CD8-positive, alpha-beta memory T cell (primary cell): ENCODE measurements at regions of chr3 and their contacts with region 1.

Region 1: DNA sequence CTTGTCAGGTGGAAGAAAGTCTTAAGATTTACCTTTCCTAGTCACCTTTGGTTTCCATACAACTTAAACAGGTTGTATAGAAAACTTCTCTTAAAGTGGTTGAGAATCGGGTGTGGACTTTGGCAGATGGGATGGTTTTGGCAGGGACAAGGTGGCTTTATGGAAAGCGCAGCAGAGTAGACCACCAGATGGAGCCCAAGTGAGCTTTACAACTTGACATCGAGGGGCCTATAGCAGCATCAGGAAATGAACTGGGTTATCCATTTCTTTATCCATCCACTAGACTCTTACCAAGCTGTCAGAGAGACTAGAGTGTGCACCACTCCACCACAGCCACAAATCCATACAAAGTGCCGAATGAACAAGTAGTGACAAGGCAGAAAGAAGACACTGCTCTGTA is 85.3 kb upstream of the MBNL1 start:
- DNase-seq: peak; percentile 20 to 71 (median 52)
- H3K4me3 ChIP-seq: no peak overlapping the region
- H3K4me3 Mint-ChIP-seq: peak overlapping the region in 3 of 7 donors; percentile 35 to 57 (median 37)
- H3K27ac ChIP-seq: no peak overlapping the region
- H3K27ac Mint-ChIP-seq: peak overlapping the region in 7 of 8 donors; percentile 22 to 71 (median 48)
- H3K4me1 ChIP-seq: peaks cover 46% of the 10 kb centered on the region
- H3K4me1 Mint-ChIP-seq: peaks cover 37 to 72% (median 59%) of the 10 kb centered on the region in 3 donors
- H3K27me3 ChIP-seq: no peaks in the 10 kb centered on the region
- H3K27me3 Mint-ChIP-seq: no peaks in the 10 kb centered on the region

Region 2: GRCh38 chr3:152193673-152194267 is 10.3 kb after region 1 on chr3:
- CTCF ChIA-PET with region 1: interaction called, 14 read pairs
- POLR2A ChIA-PET with region 1: interaction called, 3 read pairs
- DNase-seq: peak in 3 of 5 donors; percentile 11 to 61 (median 48)
- H3K4me3 ChIP-seq: peak overlapping the region; percentile 81
- H3K4me3 Mint-ChIP-seq: peak overlapping the region; percentile 87 to 95 (median 89)
- H3K27ac ChIP-seq: peak overlapping the region; percentile 83
- H3K27ac Mint-ChIP-seq: peak overlapping the region; percentile 87 to 99 (median 94)
- H3K4me1 ChIP-seq: peaks cover 66% of the 10 kb centered on the region
- H3K4me1 Mint-ChIP-seq: peaks cover 68 to 89% (median 89%) of the 10 kb centered on the region in 3 donors
- H3K27me3 ChIP-seq: no peaks in the 10 kb centered on the region
- H3K27me3 Mint-ChIP-seq: no peaks in the 10 kb centered on the region

Region 3: GRCh38 chr3:152205097-152205593 is 21.7 kb after region 1 on chr3:
- CTCF ChIA-PET with region 1: interaction called, 14 read pairs
- POLR2A ChIA-PET with region 1: no interaction called
- DNase-seq: peak in 1 of 5 donors; percentile 40
- H3K4me3 ChIP-seq: peak overlapping the region; percentile 69
- H3K4me3 Mint-ChIP-seq: peak overlapping the region; percentile 80 to 91 (median 89)
- H3K27ac ChIP-seq: peak overlapping the region; percentile 62
- H3K27ac Mint-ChIP-seq: peak overlapping the region; percentile 64 to 97 (median 96)
- H3K4me1 ChIP-seq: peaks cover 64% of the 10 kb centered on the region
- H3K4me1 Mint-ChIP-seq: peaks cover 50 to 89% (median 81%) of the 10 kb centered on the region in 3 donors
- H3K27me3 ChIP-seq: no peaks in the 10 kb centered on the region
- H3K27me3 Mint-ChIP-seq: no peaks in the 10 kb centered on the region

Region 4: DNA sequence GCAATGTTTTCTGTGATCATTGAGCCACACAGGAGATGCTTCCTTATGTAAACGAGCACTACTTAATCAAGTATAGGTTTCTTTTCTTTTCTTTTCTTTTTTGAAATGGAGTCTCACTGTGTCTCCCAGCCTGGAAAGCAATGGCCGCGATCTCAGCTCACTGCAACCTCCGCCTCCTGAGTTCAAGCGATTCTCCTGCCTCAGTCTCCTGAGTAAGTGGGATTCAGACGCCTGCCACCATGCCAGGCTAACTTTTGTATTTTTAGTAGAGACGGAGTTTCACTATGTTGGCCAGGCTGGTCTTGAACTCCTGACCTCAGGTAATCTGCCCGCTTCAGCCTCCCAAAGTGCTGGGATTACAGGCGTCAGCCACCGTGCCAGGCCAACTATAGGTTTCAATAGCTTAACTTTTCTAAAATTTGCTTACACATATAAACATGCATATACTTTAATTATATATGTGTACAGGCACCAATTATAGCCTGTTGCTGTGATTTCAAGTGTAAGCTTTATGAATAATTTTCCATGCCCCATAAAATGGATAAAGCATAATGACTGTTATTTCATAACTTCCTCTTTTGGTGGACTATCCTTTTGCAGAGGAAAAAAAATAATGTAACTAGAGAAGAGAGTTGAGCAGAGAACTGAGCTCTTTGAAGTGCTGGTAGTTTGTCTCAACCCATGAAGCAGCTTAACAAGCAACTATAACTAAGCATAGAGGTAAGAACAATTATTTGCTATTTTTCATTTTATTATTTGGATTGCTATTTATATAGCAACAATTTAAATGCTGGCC is 60.4 kb after region 1 on chr3:
- CTCF ChIA-PET with region 1: interaction called, 12 read pairs
- POLR2A ChIA-PET with region 1: interaction called, 3 read pairs
- DNase-seq: peak in 3 of 5 donors; percentile 28 to 52 (median 49)
- H3K4me3 ChIP-seq: peak overlapping the region; percentile 57
- H3K4me3 Mint-ChIP-seq: peak overlapping the region; percentile 89 to 95 (median 92)
- H3K27ac ChIP-seq: peak overlapping the region; percentile 86
- H3K27ac Mint-ChIP-seq: peak overlapping the region; percentile 68 to 97 (median 92)
- H3K4me1 ChIP-seq: peaks cover 51% of the 10 kb centered on the region
- H3K4me1 Mint-ChIP-seq: peaks cover 50 to 64% (median 61%) of the 10 kb centered on the region in 3 donors
- H3K27me3 ChIP-seq: no peaks in the 10 kb centered on the region
- H3K27me3 Mint-ChIP-seq: no peaks in the 10 kb centered on the region

Region 5: DNA sequence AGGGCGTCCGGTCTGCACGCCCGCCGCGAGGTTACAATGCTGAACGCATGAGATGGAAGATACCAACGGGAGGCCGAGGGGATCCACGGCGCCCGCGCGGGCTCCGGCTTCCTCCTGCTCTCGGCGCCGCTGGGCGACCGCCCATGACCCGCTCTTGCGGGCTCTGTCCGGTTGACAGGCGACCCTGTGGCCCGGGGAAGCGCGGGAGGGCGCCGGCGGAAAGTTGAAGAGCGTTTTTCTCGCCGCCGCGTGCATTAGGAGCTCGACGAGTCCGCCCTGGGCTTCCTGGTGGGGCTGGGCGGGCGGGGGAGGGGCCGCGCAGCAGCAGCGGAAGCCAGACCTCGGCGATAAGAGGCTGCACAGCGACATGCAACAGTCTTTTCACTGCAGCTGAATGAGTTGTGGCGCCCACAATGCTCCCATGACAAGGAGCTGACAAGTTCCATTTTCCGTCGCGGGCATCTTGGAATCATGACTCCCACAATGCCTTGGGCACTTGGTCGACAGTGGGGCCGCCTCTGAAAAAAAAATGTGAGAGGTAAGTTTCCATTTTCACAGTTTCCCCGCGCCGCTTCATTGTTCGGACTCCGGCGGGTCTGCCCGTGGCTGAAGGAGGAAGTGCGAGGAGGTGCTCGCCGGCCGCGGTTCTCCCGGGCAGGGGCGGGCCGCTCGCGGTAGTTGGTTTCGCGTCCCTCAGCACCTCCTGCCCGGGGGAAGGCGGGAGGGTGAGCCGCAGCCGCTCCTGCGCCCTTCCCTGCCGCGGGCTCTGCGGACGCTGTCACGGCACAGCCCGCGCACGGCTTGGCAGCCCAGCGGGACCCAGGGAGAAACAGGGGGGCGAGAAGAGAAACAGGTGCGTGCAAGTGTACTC is 85.3 kb after region 1 on chr3 and contains the start of gene MBNL1:
- CTCF ChIA-PET with region 1: interaction called, 11 read pairs
- POLR2A ChIA-PET with region 1: interaction called, 14 read pairs
- DNase-seq: peak; percentile 75 to 94 (median 83)
- H3K4me3 ChIP-seq: peak within 1 kb of the TSS; percentile 97
- H3K4me3 Mint-ChIP-seq: peak within 1 kb of the TSS; percentile 89 to 100 (median 99)
- H3K27ac ChIP-seq: peak within 1 kb of the TSS; percentile 96
- H3K27ac Mint-ChIP-seq: peak within 1 kb of the TSS; percentile 94 to 100 (median 98)
- H3K4me1 ChIP-seq: peaks cover 55% of the 10 kb centered on the region
- H3K4me1 Mint-ChIP-seq: peaks cover 63 to 76% (median 67%) of the 10 kb centered on the region in 3 donors
- H3K27me3 ChIP-seq: no peaks in the 10 kb centered on the region
- H3K27me3 Mint-ChIP-seq: peaks cover 0 to 3% of the 10 kb centered on the region in 2 donors
- total RNA-seq, gene MBNL1: 386 to 391 TPM

Region 6: DNA sequence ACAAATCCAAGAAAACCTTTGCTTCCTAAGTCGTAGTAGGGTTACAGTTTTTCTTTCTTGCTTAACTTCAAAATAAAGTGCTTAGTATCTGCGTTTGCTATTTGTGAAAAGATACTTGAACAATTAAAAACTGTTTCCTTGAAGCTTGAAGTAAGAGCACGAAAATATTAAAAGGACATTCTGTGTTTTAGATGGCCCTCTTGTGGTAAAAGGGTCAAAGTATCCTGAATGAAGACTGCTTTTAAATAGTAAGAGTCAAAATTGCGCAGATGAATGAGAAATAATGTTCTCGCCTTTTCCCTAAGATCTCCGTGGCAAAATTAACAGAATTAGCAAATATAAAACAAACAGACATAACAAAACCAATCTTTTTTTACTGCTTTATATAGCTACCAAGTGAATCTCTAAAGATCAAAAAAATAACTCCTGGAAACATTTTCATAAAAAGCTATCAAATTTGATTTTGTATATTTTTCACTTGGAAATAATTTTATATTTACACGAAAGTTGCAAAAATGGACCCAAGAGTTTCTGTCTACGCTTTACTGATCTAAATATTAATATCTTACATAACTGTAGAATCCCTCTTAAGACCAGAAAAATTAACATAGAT is 260.7 kb after region 1 on chr3:
- CTCF ChIA-PET with region 1: interaction called, 28 read pairs
- POLR2A ChIA-PET with region 1: no interaction called
- DNase-seq: no peak
- H3K4me3 ChIP-seq: no peak overlapping the region
- H3K4me3 Mint-ChIP-seq: peak overlapping the region in 5 of 7 donors; percentile 0 to 41 (median 1)
- H3K27ac ChIP-seq: no peak overlapping the region
- H3K27ac Mint-ChIP-seq: peak overlapping the region in 4 of 8 donors; percentile 10 to 33 (median 25)
- H3K4me1 ChIP-seq: peaks cover 66% of the 10 kb centered on the region
- H3K4me1 Mint-ChIP-seq: peaks cover 73 to 93% (median 90%) of the 10 kb centered on the region in 3 donors
- H3K27me3 ChIP-seq: no peaks in the 10 kb centered on the region
- H3K27me3 Mint-ChIP-seq: peaks cover 0 to 1% of the 10 kb centered on the region in 2 donors

Region 7: GRCh38 chr3:152471814-152472671 is 288.6 kb after region 1 on chr3:
- CTCF ChIA-PET with region 1: interaction called, 12 read pairs
- POLR2A ChIA-PET with region 1: interaction called, 3 read pairs
- DNase-seq: peak; percentile 49 to 72 (median 57)
- H3K4me3 ChIP-seq: peak overlapping the region; percentile 47
- H3K4me3 Mint-ChIP-seq: peak overlapping the region; percentile 50 to 76 (median 62)
- H3K27ac ChIP-seq: no peak overlapping the region
- H3K27ac Mint-ChIP-seq: peak overlapping the region in 7 of 8 donors; percentile 49 to 90 (median 80)
- H3K4me1 ChIP-seq: peaks cover 11% of the 10 kb centered on the region
- H3K4me1 Mint-ChIP-seq: peaks cover 11 to 30% (median 18%) of the 10 kb centered on the region in 3 donors
- H3K27me3 ChIP-seq: no peaks in the 10 kb centered on the region
- H3K27me3 Mint-ChIP-seq: peaks cover 0 to 2% of the 10 kb centered on the region in 2 donors